Dendritic cell treated with granulocyte-macrophage colony-stimulating factor and Interleukin-4, amounts not matched to agents 40 ng/mL and 50 ng/mL, for 4 days (primary cell): ENCODE measurements at regions of chr18 and their contacts with region 1.

Region 1: GRCh38 chr18:36067055-36067957 is at the start of gene RPRD1A:
- H3K4me3 Mint-ChIP-seq: peak within 1 kb of the TSS; percentile 89
- H3K27ac Mint-ChIP-seq: peak within 1 kb of the TSS; percentile 86
- H3K4me1 Mint-ChIP-seq: peaks cover 32% of the 10 kb centered on the region
- H3K27me3 Mint-ChIP-seq: peaks cover 5% of the 10 kb centered on the region

Region 2: GRCh38 chr18:35117951-35118411 is 949.3 kb before region 1 on chr18:
- intact Hi-C with region 1: no loop called
- H3K4me3 Mint-ChIP-seq: no peak overlapping the region
- H3K27ac Mint-ChIP-seq: no peak overlapping the region
- H3K4me1 Mint-ChIP-seq: peaks cover 5% of the 10 kb centered on the region
- H3K27me3 Mint-ChIP-seq: no peaks in the 10 kb centered on the region

Region 3: DNA sequence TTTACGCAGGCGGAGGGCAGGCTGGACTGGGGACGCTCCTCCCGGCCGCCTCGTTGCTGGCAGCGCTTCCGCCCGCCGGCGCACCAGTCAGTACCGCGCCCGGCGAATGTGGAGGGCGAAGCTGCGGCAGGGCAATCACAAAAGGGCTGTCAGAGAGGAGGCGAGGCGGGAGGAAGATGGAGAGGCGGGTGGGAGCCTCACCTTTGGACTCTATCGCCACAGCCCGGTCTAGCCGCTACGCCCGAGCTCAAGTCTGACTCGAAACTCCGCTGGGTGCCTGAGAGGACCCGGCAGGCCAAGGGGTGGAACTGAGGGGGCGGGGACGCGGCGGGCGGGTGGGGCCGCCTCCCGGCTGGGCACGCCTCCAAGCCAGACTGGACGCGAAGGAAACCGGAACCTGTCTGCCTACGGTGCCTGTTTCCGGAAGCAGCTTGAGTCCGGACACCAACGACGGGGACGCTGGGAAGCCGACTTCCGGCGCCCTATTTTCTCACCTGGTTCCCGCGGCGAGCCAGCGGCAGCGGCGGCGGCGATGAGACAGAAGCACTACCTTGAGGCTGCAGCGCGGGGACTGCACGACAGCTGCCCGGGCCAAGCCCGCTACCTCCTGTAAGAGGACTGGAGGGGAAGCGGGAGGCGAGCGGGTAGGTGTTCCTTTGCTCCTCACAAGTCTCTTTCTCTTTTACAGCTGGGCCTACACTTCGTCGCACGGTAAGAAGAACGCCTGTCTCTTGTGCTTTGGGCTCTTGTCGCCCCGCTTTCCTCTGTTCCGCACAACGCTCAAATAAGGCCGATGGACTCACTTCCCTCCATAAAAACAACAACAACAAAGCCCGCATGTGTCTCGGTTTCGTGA is 94.9 kb before region 1 on chr18 and contains the start of gene RMP24:
- intact Hi-C with region 1: loop called (anchors 1 kb)
- H3K4me3 Mint-ChIP-seq: peak within 1 kb of the TSS; percentile 98
- H3K27ac Mint-ChIP-seq: peak within 1 kb of the TSS; percentile 98
- H3K4me1 Mint-ChIP-seq: peaks cover 41% of the 10 kb centered on the region
- H3K27me3 Mint-ChIP-seq: no peaks in the 10 kb centered on the region

Region 4: GRCh38 chr18:36025025-36025424 is 42.3 kb before region 1 on chr18:
- intact Hi-C with region 1: loop called (anchors 5 kb)
- H3K4me3 Mint-ChIP-seq: no peak overlapping the region
- H3K27ac Mint-ChIP-seq: no peak overlapping the region
- H3K4me1 Mint-ChIP-seq: peaks cover 6% of the 10 kb centered on the region
- H3K27me3 Mint-ChIP-seq: no peaks in the 10 kb centered on the region

Region 5: DNA sequence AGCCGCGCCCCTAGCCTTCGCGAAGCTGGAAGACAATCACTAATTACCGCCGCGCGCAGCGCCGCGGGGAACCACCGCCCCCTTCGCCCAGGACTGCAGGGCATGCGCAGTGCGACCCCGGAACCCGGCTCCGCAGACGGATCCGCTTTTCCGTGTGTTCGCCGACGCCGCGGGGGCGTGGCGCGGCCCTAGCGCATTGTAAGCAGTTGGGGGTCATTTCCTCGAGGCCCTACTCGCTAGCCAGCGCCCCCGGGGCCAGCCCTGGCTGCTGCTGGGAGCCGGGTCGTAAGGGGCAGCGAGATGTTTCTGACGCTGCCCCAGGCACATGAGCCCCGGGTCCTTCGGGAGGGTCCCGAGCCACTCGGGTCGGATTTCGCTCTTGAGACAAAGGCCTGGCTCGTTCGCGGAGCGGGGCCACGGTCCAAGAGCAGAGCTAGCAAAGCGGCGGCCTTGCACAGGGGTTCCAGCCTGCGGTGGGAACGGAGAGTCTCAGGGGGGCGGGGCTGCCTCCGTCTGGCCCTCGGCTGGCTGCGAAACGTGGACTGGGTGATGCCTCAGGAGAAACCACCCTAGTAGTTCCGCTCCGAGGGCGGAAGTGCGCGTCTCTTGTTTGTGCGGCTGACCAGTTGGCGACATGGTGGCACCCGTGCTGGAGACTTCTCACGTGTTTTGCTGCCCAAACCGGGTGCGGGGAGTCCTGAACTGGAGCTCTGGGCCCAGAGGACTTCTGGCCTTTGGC is 62.2 kb after region 1 on chr18 and contains the starts of genes ELP2 and SLC39A6:
- intact Hi-C with region 1: loop called (anchors 1 kb)
- H3K4me3 Mint-ChIP-seq: peak within 1 kb of the TSS; percentile 94
- H3K27ac Mint-ChIP-seq: peak within 1 kb of the TSS; percentile 99
- H3K4me1 Mint-ChIP-seq: peaks cover 40% of the 10 kb centered on the region
- H3K27me3 Mint-ChIP-seq: no peaks in the 10 kb centered on the region

Region 6: GRCh38 chr18:36558234-36558633 is 490.9 kb after region 1 on chr18:
- intact Hi-C with region 1: no loop called
- H3K4me3 Mint-ChIP-seq: no peak overlapping the region
- H3K27ac Mint-ChIP-seq: no peak overlapping the region
- H3K4me1 Mint-ChIP-seq: no peaks in the 10 kb centered on the region
- H3K27me3 Mint-ChIP-seq: no peaks in the 10 kb centered on the region